Panc1 (cell line): ENCODE measurements at regions of chr1 and their contacts with region 1.

Region 1: DNA sequence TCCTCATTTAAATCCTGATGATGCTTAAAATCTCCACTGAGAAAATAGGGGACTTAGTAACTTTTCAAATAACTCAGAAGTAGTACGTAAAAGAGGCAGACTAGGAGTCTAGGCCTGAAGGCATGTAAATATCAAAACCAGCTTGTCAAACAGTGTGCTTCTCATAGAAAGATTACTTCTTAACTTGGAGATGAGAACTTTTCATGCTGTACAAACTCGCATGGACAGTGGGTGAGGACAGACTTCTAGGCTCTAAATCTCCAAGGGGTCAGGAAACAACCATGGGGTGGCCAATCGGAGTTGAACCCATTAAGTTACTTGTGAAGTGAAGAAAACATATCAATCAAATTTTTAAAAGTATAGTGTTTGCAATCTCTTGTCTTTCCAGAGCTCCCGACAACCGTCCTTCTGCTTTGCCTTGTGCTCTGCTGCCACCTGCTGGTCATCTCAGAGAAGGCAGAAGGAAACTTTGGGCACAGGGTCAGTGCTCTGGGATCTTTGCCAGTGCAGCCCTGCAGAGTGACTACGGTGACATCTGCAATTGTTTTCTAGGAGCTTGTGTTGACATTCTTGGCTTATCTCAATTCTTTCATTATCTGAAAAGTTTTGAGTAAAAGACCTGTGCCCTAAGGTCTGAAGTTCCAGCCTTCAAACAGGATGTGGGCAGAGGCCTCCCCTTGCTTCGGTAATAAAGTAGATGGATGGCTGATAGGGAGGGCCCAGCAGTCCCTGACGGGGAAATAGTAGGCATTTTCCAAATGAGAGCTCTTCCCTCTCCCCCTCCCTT is 105.1 kb upstream of the PDE4B start:
- DNase-seq: peak; percentile 71
- ATAC-seq: peak; percentile 87
- H3K4me3 ChIP-seq: no peak overlapping the region
- H3K27ac ChIP-seq: no peak overlapping the region
- H3K4me1 ChIP-seq: 0 out of 2 replicates have a peak, but pooled peaks cover 2% of the 10 kb centered on the region
- H3K27me3 ChIP-seq: no peaks in the 10 kb centered on the region
- CTCF ChIP-seq: peak; percentile 91

Region 2: GRCh38 chr1:65059930-65060538 is 627.6 kb before region 1 on chr1:
- CTCF ChIA-PET with region 1: interaction called, 3 read pairs
- POLR2A ChIA-PET with region 1: no interaction called
- in situ Hi-C with region 1: no loop called
- intact Hi-C with region 1: loop called (anchors 2 kb)
- DNase-seq: no peak
- ATAC-seq: no peak
- H3K4me3 ChIP-seq: no peak overlapping the region
- H3K27ac ChIP-seq: no peak overlapping the region
- H3K4me1 ChIP-seq: no peaks in the 10 kb centered on the region
- H3K27me3 ChIP-seq: peaks cover 7% of the 10 kb centered on the region
- CTCF ChIP-seq: peak; percentile 68; the same call in 1 of the 2 replicates

Region 3: DNA sequence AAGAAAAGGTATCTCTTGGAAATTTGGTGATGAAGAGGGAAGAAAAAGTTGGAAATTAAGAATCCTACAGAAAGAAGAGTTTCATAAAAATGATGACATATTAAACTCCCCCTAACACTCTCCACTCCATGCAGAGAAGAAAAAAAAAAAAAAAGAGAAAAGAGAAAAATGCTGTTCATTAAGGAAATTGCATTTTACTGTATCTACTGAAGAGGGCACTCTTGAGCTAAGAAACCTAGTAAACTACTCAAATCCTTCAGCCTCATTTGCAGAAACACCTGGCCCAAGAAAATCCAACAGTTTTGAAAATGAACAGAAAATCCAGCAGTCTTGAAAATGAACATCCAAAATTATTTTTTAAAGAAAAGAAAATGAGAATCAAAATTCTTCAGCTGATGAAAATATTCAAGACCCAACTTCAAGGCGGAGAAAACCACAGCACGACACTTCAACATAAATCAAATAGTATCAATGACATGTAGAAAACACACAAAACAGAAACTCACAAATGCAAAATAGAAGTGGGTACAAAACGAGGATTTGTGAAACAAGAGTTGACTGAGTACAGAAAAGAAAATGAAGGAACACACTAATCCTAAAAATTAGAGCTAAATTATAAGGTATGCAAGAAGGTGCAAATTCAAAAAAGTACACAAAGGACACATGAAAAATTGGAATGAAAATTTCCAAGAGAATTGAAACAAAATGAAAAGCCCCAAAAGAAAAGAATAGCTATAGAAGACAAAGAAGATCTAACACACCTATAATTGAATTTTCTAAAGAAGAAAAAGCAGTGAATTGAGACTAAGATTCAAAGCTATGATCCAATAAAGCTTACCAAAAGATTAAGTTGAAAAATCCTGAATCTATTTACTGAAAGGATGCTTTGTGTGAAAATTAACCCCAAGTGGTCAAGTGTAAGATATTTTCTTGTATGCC is 451.5 kb before region 1 on chr1:
- CTCF ChIA-PET with region 1: interaction called, 4 read pairs
- POLR2A ChIA-PET with region 1: no interaction called
- in situ Hi-C with region 1: no loop called
- intact Hi-C with region 1: loop called (anchors 1 kb)
- DNase-seq: no peak
- ATAC-seq: no peak
- H3K4me3 ChIP-seq: no peak overlapping the region
- H3K27ac ChIP-seq: no peak overlapping the region
- H3K4me1 ChIP-seq: no peaks in the 10 kb centered on the region
- H3K27me3 ChIP-seq: no peaks in the 10 kb centered on the region
- CTCF ChIP-seq: peak; percentile 60; the same call in 1 of the 2 replicates

Region 4: GRCh38 chr1:65431111-65431705 is 256.4 kb before region 1 on chr1:
- CTCF ChIA-PET with region 1: no interaction called
- POLR2A ChIA-PET with region 1: no interaction called
- in situ Hi-C with region 1: no loop called
- intact Hi-C with region 1: loop called (anchors 1 kb)
- DNase-seq: no peak
- ATAC-seq: no peak; the same call in 1 of the 2 replicates
- H3K4me3 ChIP-seq: no peak overlapping the region
- H3K27ac ChIP-seq: no peak overlapping the region
- H3K4me1 ChIP-seq: no peaks in the 10 kb centered on the region
- H3K27me3 ChIP-seq: no peaks in the 10 kb centered on the region
- CTCF ChIP-seq: peak; percentile 64; the same call in 1 of the 2 replicates